ENCODE measurements at regions of chr3 and their contacts with region 1.

Region 1: DNA sequence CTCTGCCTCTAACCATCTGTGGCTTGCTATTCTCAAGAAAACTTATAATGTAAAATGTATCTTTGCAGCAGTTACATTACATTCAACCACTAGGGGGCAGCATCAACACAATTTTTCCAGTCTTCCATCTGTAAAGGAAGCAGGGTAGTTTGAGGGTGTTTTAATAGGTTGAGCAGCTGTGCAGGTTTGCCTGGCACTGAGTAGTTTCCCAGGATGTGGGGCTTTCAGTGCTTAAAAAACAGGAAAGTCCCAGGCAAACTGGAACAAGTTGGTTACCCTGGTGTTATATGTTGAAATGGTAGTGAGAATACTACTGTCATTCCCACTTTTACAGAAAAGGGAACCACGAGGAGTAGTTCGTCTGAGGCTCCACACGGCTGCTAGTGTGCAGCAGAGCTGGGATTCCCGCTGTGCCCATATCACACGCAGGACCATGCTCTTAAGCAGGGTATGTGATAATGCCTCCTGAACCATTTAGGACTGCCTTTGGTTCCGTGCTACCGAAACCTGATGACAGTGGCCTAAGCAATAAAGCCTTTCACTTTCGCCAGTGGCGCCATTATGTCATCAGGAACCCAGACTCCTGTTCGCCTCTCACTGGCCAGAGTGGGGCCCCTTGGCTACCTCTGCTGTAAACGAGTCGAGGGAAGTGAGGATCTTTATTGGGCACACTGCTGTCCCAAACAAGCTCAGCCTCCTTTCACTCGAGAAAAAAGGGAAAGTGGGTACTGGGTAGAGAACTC is 64.7 kb upstream of the ZBTB38 start:
- DNase-seq: peak; percentile 78
- CTCF ChIP-seq: peak; percentile 63

Region 2: DNA sequence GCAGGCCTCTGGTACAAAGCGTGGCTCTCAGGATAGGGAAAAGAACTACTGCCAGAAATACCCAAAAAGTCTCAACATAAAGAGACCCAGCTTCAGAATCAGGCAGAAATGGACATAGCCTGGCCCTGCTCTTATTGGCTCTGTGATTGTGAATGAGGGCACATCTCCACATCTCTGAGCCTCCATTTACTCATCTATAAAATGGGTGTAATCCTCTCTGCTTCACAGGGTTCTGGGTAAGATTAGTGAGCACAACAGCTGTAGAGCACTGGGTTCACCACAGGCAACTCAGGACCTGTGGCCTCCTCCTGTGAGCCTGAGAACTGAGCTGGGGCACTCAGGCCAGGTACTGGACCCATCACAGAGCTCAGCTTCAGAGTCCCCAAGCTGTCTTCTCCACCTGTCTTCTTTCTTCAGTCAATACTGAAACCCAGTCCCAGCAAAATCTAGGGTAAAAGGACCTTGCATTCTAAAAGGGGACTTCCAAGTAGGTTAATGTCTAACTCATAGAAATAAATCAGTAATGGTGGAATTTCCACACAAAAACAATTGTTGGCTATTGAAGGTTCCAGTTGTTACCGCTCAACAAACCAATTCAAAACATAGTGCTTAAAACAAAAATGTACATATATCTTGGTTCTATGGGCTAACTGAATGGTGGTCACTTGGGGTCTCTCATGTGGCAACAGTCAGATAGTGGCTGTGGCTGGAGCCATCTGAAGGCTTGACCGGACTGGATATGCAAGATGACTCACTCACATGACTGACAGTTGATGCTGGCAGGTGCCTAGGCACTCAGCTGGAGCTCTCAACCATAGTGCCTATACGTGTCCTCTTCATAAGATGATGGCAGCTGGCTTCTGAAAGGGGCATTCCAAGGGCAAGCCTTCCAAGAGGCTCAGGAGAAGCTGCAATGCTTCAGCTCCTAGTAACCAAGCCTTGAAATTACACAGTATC is 578.5 kb before region 1 on chr3:
- CTCF ChIA-PET with region 1: no interaction called
- POLR2A ChIA-PET with region 1: no interaction called
- DNase-seq: peak; percentile 31
- CTCF ChIP-seq: no peak

Region 3: GRCh38 chr3:140850210-140850808 is 453.3 kb before region 1 on chr3:
- CTCF ChIA-PET with region 1: no interaction called
- POLR2A ChIA-PET with region 1: no interaction called
- DNase-seq: no peak
- CTCF ChIP-seq: no peak

Region 4: GRCh38 chr3:141279077-141279967 is 24.3 kb before region 1 on chr3:
- CTCF ChIA-PET with region 1: interaction called, 11 read pairs
- POLR2A ChIA-PET with region 1: no interaction called
- DNase-seq: peak; percentile 56
- CTCF ChIP-seq: peak; percentile 34

Region 5: GRCh38 chr3:141331377-141332318 is 28.0 kb after region 1 on chr3:
- CTCF ChIA-PET with region 1: interaction called, 16 read pairs
- POLR2A ChIA-PET with region 1: no interaction called
- DNase-seq: no peak
- CTCF ChIP-seq: no peak

Region 6: DNA sequence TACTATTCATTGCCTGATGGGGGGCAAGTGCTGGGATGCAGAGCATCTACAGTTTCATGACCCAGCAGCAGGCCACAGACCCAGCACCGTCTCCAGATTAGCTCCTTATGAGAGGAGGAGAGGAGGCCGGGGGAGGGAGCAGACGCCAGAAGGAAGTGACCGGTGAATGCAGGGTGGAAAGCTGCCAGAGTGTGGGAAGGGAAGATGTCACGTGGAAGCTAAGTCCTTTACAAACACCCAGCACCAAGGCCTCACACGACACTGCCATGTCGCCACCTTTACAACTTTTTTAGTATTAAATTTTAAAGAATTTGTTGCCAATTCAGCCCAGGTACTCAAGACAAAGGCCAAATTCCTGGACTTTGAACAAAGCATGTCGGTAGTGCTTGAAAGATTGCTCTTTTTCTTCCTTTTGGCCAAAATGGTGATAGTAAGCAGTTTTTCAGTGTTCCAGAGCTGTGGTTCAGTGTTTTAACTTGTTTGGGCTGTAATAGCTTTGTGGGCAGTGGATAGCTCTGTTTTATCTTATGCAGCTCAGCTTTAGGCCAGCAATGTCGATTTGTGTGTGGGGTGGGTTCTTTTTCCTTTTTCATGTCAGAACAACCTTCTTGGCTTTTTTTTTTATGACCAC is 122.9 kb after region 1 on chr3:
- CTCF ChIA-PET with region 1: interaction called, 37 read pairs
- POLR2A ChIA-PET with region 1: no interaction called
- DNase-seq: no peak
- CTCF ChIP-seq: no peak

Region 7: GRCh38 chr3:141478139-141478538 is 174.5 kb after region 1 on chr3:
- CTCF ChIA-PET with region 1: interaction called, 11 read pairs
- POLR2A ChIA-PET with region 1: no interaction called
- DNase-seq: no peak
- CTCF ChIP-seq: no peak

Measured in GM10248 (cell line).